ENCODE measurements at regions of chr9 and their contacts with region 1.

Region 1: GRCh38 chr9:100598641-100599145 is 20.8 kb downstream of the CAVIN4 start:
- DNase-seq: peak; percentile 76 to 94
- H3K4me3 ChIP-seq: peak overlapping the region; percentile 66
- H3K27ac ChIP-seq: 0 out of 2 replicates have a peak overlapping the region, but pooled peaks have one; percentile 17
- H3K4me1 ChIP-seq: peaks cover 12% of the 10 kb centered on the region
- H3K27me3 ChIP-seq: no peaks in the 10 kb centered on the region
- CTCF ChIP-seq: no peak

Region 2: DNA sequence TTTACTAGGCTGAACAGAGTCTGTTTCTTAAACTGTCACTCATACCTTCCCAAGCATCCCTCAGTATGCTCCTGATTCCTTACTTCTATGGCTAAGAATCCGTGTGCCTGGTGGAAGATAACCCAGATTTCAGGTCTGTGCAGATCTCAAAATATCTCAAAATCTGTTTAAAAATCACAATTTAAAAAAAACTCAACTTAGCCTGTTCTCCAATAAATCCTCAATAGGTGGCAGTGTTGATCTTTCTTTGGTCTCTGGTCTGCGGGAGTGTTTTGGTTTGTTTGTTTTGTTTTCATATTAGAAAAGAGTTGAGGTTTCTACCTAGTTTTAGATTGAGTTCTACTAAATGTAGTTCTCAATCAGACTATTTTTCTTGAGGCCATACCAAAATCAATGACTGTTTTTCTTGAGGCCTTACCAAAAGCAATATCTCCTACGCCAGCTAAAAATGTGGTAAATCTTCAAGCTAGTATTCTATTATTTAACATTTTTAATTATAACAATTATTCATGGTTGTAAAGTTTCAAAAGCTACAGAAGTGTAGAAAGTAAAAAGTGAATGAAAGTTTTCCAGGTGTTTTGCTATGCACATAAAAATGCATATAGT is 1435.8 kb before region 1 on chr9:
- CTCF ChIA-PET with region 1: no interaction called
- POLR2A ChIA-PET with region 1: no interaction called
- intact Hi-C with region 1: loop called (anchors 5 kb)
- DNase-seq: no peak
- H3K4me3 ChIP-seq: no peak overlapping the region
- H3K27ac ChIP-seq: no peak overlapping the region
- H3K4me1 ChIP-seq: no peaks in the 10 kb centered on the region
- H3K27me3 ChIP-seq: no peaks in the 10 kb centered on the region
- CTCF ChIP-seq: peak; percentile 79

Region 3: DNA sequence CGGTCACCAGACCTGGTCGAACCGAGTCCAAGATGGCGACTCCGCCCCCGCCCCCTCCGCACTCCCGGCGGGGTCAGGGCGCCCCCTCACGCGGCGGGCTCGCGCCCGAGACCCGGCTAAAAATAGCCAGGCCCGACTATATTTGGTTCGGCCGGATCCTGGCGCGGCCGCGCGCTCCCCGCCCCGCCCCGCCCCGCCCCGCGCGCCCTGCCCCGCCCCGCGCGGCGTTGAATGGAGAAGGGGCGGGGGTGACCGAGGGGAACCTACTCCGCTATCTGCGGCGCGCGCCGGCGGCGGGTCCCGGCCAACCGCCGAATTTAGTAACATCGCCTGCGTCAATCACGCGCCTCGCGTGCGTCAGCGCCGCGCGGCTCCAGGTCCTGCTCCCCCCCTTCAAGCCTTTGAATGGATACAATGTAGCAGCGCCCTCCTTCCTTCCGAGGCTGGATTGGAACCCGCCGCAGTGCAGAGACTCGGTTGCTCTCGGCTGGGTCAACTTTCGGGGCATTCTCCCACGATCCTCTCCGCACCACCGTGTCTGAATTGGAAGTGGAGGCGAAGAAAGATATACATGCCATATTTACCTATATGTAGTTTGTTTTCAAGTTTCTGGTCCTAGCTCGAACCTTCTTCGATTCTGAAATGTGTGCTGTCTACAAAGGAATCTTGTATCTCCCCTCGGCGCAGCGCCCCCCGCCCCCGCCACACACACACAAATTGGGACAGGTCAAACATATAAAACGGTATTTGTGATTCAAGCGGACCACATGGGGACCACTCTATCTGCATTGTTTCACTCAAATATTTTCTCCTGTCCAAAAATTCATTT is 778.6 kb before region 1 on chr9:
- CTCF ChIA-PET with region 1: no interaction called
- POLR2A ChIA-PET with region 1: no interaction called
- intact Hi-C with region 1: loop called (anchors 5 kb)
- DNase-seq: peak; percentile 70 to 89
- H3K4me3 ChIP-seq: peak overlapping the region; percentile 87
- H3K27ac ChIP-seq: peak overlapping the region; percentile 68
- H3K4me1 ChIP-seq: peaks cover 32% of the 10 kb centered on the region
- H3K27me3 ChIP-seq: peaks cover 20% of the 10 kb centered on the region
- CTCF ChIP-seq: no peak

Region 4: GRCh38 chr9:100306283-100306682 is 292.4 kb before region 1 on chr9:
- CTCF ChIA-PET with region 1: no interaction called
- POLR2A ChIA-PET with region 1: interaction called, 10 read pairs
- intact Hi-C with region 1: no loop called
- DNase-seq: no peak
- H3K4me3 ChIP-seq: no peak overlapping the region
- H3K27ac ChIP-seq: no peak overlapping the region
- H3K4me1 ChIP-seq: no peaks in the 10 kb centered on the region
- H3K27me3 ChIP-seq: no peaks in the 10 kb centered on the region
- CTCF ChIP-seq: no peak

Region 5: DNA sequence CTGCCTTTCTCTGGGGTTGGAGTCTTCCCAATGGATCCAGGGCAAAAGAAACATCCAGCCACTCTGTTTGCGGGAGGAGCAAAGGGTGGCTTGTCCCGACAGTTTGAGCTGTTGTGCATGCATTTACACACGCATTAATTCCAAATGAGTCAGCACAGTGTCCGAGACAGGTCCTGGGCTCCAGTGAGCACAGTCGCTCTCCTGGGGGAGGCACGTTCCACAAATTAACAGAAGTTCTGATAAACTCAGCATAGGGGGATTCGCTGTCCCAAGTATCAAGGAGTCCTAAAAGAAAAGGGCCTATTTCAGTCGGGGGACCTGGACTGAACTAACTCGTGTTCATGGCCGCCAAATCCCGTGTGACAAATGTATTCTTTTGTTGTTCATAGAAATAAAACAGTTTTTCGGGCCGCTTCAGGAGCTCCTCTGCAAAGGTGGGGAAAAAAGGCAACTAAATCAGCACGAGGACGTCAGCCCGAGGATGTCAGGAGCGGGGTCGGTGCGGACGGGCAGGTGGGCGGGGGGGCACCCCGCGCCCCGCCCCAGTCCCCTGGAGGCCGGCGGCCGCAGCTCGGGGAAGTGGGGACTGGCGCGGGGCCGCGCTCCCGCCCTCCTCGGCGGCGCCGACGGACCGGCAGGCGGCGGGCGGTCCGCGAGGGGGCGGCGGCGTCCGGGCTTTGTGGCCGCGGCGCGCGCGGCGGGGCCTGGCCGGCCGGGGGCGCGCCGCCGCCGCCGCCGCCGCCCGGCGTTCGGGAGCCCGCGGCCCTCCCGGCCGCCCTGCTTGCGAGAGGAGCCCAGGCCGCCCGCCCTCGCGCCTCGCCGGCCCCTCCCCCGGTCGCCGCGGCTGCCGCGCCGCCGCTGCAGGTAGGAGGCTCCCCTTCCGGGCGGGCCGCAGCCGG is 171.9 kb before region 1 on chr9 and contains the start of gene MSANTD3:
- CTCF ChIA-PET with region 1: interaction called, 9 read pairs
- POLR2A ChIA-PET with region 1: no interaction called
- intact Hi-C with region 1: loop called (anchors 5 kb)
- DNase-seq: peak; percentile 58 to 67
- H3K4me3 ChIP-seq: peak within 1 kb of the TSS; percentile 96
- H3K27ac ChIP-seq: peak within 1 kb of the TSS; percentile 89
- H3K4me1 ChIP-seq: peaks cover 40% of the 10 kb centered on the region
- H3K27me3 ChIP-seq: no peaks in the 10 kb centered on the region
- CTCF ChIP-seq: no peak
- total RNA-seq, gene MSANTD3: 40.0 and 53.2 TPM in 2 replicates

Region 6: DNA sequence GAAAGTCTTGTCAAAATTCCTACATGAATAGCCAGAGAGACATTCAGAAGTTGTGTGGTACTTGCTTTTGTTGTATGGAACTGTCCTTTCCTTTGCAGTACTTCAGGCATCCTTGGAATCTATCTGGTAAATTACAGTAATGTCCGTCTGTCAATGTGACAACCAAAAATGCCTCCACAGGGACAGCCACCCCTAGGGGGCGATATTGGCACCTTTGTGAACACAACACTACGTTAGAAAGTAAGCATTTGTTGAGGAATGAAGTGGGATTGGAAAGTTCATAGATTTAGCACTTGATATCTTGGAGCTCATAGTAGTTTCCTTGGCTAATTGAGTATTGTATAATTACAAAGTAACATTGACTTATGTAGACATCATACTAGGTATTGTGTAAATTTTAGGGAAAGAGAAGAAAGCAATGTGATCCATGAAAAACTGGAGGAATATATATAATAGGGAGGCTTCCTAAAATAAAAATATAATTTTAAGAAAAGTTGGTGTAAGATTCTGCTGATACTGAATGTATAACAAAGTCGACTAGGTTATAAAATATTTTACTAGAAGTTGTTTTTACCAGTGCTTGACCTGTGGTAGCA is 93.0 kb before region 1 on chr9:
- CTCF ChIA-PET with region 1: no interaction called
- POLR2A ChIA-PET with region 1: no interaction called
- intact Hi-C with region 1: loop called (anchors 1 kb)
- DNase-seq: peak; percentile 60 to 81
- H3K4me3 ChIP-seq: no peak overlapping the region
- H3K27ac ChIP-seq: no peak overlapping the region
- H3K4me1 ChIP-seq: no peaks in the 10 kb centered on the region
- H3K27me3 ChIP-seq: no peaks in the 10 kb centered on the region
- CTCF ChIP-seq: peak; percentile 79

Region 7: DNA sequence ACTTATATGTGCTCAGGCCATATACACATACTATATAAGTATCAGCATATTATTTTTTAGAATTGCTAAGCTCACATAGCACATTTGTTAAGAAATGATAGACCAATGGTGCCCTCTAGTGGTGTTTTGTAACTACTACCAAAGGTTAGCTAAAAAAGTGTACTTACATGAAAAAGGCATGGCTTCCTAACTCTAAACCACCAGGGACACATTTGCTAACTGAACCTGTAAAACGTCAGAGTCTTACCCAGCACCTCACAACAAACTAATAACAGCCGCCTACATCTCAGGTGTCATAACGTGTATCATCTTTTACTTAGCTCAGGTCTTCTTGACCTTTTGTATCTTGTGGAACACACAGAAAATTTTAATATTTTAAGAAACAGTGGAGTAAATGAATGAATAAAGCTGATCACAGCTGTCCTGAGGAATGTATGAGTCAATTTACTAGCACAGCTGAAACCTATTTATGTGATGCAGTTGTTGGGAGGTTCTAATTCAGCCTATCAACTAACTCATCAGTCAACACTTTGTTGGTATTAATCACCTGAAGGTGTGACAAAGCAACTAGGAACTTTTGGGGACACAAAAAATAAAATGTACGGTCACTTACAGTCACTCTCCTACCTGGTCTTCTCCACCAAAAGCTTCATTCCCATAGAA is 713.2 kb after region 1 on chr9:
- CTCF ChIA-PET with region 1: interaction called, 28 read pairs
- POLR2A ChIA-PET with region 1: no interaction called
- intact Hi-C with region 1: loop called (anchors 1 kb)
- DNase-seq: peak in 1 of 2 experiments; percentile 61
- H3K4me3 ChIP-seq: no peak overlapping the region
- H3K27ac ChIP-seq: no peak overlapping the region
- H3K4me1 ChIP-seq: no peaks in the 10 kb centered on the region
- H3K27me3 ChIP-seq: peaks cover 42% of the 10 kb centered on the region
- CTCF ChIP-seq: peak; percentile 83

Measured in PC-9 (cell line).